ENCODE measurements at regions of chr20 and their contacts with region 1.

Region 1: DNA sequence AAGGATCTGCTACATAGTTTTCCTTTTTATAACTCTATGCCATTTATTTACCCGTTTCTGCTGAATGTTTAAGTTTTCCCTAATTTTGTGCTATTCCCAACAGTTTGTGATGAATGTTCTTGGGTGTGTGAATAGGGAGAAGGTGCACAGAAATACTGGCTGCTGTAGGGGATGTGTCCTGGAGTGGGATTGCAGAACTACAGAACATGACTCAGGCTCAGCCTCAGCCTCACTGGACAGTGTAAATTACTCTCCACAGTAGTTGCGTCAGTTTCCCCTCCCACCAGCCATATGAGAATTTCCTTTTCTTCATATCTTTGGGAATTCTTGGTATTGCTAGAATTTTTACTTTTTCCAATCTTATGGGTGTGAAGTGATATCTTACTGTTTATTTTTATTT is 57.0 kb downstream of the SLX4IP start:
- DNase-seq: no peak
- H3K4me3 ChIP-seq: no peak overlapping the region
- H3K27ac ChIP-seq: no peak overlapping the region
- H3K4me1 ChIP-seq: no peaks in the 10 kb centered on the region
- H3K27me3 ChIP-seq: no peaks in the 10 kb centered on the region
- CTCF ChIP-seq: no peak

Region 2: DNA sequence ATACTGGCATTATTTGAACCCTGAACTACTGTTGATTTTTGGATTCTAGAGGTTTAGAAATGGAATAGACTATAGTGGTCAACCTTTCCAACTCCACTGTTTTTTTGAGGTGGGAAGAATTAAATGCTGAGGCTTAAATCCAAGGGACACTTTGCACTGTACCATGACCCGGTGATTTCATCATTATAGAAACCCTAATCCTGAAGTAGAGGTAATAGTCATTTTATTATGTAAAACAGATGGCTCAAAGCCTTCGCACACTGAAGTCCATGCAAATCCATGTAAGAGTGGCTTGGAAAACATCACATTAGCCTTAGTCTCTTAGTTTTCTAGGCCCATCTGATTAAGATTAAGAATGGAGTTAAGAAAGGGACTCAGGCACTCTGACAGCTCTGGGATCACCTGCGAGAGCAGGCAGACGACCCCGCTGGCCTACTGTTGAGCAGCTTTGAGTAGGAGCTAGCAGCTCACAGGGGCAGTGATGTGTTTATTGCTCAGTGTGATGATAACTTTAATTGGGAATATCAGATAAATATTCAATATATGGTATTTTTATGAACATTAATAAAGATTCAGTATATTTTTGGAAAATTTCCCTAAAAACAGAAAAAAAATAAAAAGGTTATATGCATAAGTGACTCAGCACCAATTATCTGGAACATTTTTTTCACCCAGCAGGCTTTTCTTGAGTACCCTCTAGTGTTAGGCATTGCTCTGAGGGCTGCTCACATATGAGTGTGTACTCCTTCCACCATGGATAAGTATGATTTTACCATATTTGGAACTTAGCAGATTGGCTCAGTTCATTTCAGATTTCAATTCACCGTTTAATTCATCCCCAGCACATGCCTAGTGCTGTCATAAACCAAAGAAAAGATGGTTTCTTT is 43.6 kb before region 1 on chr20:
- CTCF ChIA-PET with region 1: no interaction called
- POLR2A ChIA-PET with region 1: interaction called, 25 read pairs
- intact Hi-C with region 1: no loop called
- DNase-seq: no peak
- H3K4me3 ChIP-seq: no peak overlapping the region
- H3K27ac ChIP-seq: no peak overlapping the region
- H3K4me1 ChIP-seq: peaks cover 11% of the 10 kb centered on the region
- H3K27me3 ChIP-seq: no peaks in the 10 kb centered on the region
- CTCF ChIP-seq: no peak

Region 3: GRCh38 chr20:11144114-11144950 is 652.3 kb after region 1 on chr20:
- CTCF ChIA-PET with region 1: no interaction called
- POLR2A ChIA-PET with region 1: no interaction called
- intact Hi-C with region 1: no loop called
- DNase-seq: no peak
- H3K4me3 ChIP-seq: no peak overlapping the region
- H3K27ac ChIP-seq: no peak overlapping the region
- H3K4me1 ChIP-seq: 0 out of 2 replicates have a peak, but pooled peaks cover 5% of the 10 kb centered on the region
- H3K27me3 ChIP-seq: no peaks in the 10 kb centered on the region
- CTCF ChIP-seq: no peak